Endothelial cell of umbilical vein (primary cell): ENCODE measurements at regions of chr18 and their contacts with region 1.

Region 1: GRCh38 chr18:49412679-49413078 is 47.8 kb downstream of the DYM start:
- DNase-seq: peak; percentile 35
- H3K4me3 ChIP-seq: no peak overlapping the region
- H3K27ac ChIP-seq: peak overlapping the region; percentile 56
- H3K4me1 ChIP-seq: peaks cover 18% of the 10 kb centered on the region
- H3K27me3 ChIP-seq: no peaks in the 10 kb centered on the region
- CTCF ChIP-seq: no peak
- POLR2A ChIP-seq: no peak

Region 2: DNA sequence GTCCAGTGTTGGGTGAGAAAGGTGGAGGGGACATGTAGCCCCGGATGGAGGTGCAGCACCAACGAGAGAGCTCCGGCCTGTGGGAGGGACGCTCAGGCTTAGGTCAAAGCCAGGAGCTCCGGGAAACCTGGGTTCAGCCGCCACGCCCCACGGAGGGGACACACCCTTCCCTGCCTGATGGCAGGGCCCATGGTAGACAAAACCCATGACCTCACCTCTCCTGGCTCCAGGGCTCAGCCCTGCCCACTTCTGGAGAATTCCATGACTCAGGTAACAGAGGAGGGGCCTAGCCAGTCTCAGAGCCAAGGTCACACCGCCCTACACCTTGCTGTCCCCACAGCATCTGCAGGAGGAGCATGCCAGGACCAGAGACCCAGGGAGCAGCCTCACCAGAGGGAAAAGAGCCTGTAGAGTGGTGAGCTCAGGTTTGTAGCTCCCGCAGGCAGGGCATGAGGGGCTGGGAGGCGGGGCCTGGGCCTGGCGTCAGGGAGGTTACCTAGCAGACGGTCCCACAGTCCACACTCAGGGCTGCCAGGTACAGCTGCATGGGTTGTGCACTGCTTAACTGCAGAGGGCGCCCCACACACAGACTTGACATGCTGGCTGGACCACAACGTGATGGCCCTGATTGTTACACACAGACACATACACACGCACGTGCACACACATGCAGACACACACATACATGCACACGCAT is 391.1 kb before region 1 on chr18:
- CTCF ChIA-PET with region 1: interaction called, 3 read pairs
- POLR2A ChIA-PET with region 1: no interaction called
- dilution Hi-C with region 1: no loop called
- intact Hi-C with region 1: loop called (anchors 2 kb)
- DNase-seq: peak; percentile 19
- H3K4me3 ChIP-seq: no peak overlapping the region
- H3K27ac ChIP-seq: no peak overlapping the region
- H3K4me1 ChIP-seq: no peaks in the 10 kb centered on the region
- H3K27me3 ChIP-seq: no peaks in the 10 kb centered on the region
- CTCF ChIP-seq: peak; percentile 46 to 60
- POLR2A ChIP-seq: no peak

Region 3: DNA sequence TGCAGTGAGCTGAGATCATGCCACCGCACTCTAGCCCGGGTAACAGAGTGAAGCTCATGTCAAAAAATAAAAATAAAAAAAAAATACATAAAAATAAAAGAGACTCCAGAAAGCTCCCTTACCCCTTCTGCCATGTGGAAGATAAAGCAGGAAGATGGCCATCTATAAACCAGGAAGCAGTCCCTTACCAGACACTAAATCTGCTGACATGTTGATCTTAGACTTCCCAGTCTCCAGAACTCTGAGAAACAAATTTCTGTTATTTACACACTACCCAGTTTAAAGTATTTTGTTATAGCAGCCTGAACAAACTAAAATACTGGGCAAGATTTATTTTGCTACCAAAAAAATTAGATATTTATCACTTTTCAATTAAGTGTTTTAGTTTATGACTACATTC is 325.8 kb before region 1 on chr18:
- CTCF ChIA-PET with region 1: no interaction called
- POLR2A ChIA-PET with region 1: interaction called, 11 read pairs
- dilution Hi-C with region 1: no loop called
- intact Hi-C with region 1: no loop called
- DNase-seq: no peak
- H3K4me3 ChIP-seq: no peak overlapping the region
- H3K27ac ChIP-seq: no peak overlapping the region
- H3K4me1 ChIP-seq: no peaks in the 10 kb centered on the region
- H3K27me3 ChIP-seq: no peaks in the 10 kb centered on the region
- CTCF ChIP-seq: no peak
- POLR2A ChIP-seq: no peak

Region 4: DNA sequence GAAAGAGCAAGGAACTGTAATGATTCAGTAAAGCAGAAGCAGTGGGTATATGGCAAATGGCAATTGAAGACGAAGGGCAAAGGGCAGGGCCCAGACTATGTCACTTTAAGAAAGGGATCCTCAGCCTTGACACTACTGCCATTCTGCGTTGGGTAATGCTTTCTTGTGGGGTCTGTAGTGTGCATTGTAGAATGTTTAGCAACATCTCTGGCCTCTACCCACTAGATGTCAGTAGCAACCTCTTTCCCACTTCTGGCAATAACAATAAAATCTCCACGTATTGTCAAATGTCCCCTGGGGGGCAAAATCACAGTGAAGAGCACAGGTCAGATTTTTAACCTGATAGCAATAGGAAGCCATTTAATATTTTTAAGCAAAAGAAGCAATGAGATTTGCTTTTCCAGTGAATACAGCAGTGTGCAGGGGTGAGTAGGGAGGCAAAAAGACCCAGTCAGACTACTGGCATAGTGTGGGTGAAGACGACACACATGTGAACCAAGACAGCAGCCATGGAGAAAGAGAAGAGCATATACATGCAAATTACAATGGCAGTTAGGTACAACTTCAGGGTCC is 161.8 kb before region 1 on chr18:
- CTCF ChIA-PET with region 1: interaction called, 30 read pairs
- POLR2A ChIA-PET with region 1: no interaction called
- dilution Hi-C with region 1: no loop called
- intact Hi-C with region 1: loop called (anchors 1 kb)
- DNase-seq: peak; percentile 47
- H3K4me3 ChIP-seq: no peak overlapping the region
- H3K27ac ChIP-seq: no peak overlapping the region
- H3K4me1 ChIP-seq: peaks cover 38% of the 10 kb centered on the region
- H3K27me3 ChIP-seq: no peaks in the 10 kb centered on the region
- CTCF ChIP-seq: peak; percentile 32 to 52
- POLR2A ChIP-seq: no peak

Region 5: DNA sequence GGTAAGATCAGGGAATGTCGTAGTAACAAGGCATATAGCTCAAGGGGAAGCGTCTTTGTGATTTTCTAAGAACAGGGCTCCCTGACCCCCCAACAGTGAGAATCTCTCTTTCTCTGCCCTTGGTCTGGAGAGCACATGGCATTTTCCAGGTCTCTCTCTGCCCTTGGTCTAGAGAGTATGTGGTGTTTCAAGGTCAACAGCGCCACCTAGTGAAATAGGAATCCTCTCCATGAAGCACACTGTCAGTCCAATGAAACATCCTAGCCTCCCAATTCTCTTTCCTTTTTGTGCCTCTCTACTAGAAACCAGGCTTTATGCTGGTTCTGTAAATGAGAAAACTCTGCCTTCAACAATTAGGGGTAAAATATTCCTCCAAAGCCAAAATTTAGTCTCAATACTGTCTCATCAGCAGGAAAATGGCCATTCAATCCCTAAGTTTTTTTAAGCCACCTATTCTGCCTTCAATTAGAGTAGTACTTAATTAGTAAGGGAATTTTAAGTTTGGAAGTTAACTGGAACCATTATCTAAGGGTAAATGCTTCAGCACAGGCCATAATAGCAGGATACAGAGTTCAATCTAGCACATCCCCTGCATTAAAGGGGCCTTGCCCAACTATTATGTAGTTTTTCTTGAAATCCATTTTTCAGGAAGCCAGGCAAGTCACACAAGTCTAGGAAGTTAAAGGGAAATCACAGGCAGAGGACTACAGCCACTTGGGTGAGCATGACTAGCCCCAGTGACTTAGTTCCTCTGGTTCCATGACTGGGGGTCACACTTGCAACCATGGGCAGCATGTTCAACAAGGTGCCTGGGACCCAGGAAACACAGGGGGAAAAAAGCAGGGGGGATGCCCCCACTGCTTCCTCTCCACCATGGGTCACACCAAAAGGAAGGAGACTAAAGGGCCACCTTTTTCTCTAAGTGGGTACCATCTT is 35.4 kb after region 1 on chr18:
- CTCF ChIA-PET with region 1: interaction called, 5 read pairs
- POLR2A ChIA-PET with region 1: no interaction called
- dilution Hi-C with region 1: no loop called
- intact Hi-C with region 1: loop called (anchors 2 kb)
- DNase-seq: peak; percentile 53
- H3K4me3 ChIP-seq: no peak overlapping the region
- H3K27ac ChIP-seq: no peak overlapping the region
- H3K4me1 ChIP-seq: no peaks in the 10 kb centered on the region
- H3K27me3 ChIP-seq: no peaks in the 10 kb centered on the region
- CTCF ChIP-seq: peak; percentile 68
- POLR2A ChIP-seq: no peak